Caco-2 (cell line): ENCODE measurements at regions of chr6 and their contacts with region 1.

Region 1: DNA sequence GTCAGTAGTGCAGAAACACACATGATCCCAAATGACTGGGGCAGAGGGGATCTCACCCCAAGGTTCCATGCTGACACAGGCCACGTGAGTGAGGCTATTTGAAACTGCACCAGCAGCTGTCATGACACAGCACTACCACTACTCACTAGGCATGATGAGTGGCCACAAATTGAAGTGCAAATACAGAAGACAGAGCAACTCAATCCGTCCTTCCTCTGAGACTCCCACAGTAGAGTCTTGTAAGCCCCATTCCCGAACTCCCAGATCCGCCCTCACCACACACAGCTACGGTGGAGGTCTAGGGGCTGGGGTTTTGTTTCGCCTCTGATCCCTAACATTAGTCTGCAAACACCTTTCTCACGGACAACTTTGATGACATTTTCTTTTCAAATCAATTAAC is 113.3 kb upstream of the NUP153 start:
- DNase-seq: peak in 1 of 2 experiments; percentile 9
- H3K4me3 ChIP-seq: no peak overlapping the region
- H3K4me3 Mint-ChIP-seq: no peak overlapping the region
- H3K27ac Mint-ChIP-seq: no peak overlapping the region
- H3K4me1 ChIP-seq: peaks cover 17% of the 10 kb centered on the region
- H3K4me1 Mint-ChIP-seq: peaks cover 14% of the 10 kb centered on the region
- H3K27me3 ChIP-seq: no peaks in the 10 kb centered on the region
- H3K27me3 Mint-ChIP-seq: no peaks in the 10 kb centered on the region
- CTCF ChIP-seq: peak in 1 of 2 experiments; percentile 5

Region 2: DNA sequence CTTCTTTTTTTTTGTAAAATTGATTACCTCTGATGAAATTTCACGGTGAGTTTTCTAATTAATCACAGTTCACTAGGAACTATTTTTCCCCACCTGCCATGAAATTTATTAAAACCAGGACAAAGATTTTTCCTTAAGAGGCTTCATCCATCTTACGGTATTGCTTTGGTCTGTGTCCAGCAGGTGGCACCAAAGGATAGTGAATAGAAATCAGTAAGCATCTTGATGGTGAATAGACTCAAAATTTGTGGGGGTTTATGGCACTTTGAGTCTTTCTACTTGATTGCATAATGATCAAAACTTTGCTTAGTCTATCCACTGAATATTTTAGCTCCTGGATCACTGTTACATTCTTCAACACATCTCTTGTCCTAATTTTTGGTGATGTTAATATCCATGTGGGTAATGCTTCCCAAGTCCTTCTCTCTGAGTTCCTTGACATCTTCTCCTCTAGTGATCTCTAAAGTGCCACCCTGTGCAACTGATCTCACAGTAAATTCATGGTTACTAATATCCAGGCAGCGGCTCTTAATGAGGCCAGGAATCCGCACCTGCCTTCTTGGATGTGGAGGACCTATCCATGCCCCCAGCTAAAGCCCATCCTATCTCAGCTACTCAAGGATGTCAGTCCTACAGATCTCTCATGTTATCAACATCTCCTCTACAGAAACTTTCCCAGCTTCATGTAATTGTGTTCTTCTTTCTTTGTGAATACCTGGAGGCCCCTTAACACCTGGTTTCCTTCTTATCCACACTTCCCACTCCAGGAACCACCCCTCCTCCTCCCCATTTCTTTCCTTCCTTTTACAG is 663.7 kb before region 1 on chr6:
- CTCF ChIA-PET with region 1: no interaction called
- POLR2A ChIA-PET with region 1: no interaction called
- intact Hi-C with region 1: loop called (anchors 1 kb)
- DNase-seq: peak; percentile 47 to 70
- H3K4me3 ChIP-seq: no peak overlapping the region
- H3K4me3 Mint-ChIP-seq: no peak overlapping the region
- H3K27ac Mint-ChIP-seq: no peak overlapping the region
- H3K4me1 ChIP-seq: no peaks in the 10 kb centered on the region
- H3K4me1 Mint-ChIP-seq: no peaks in the 10 kb centered on the region
- H3K27me3 ChIP-seq: no peaks in the 10 kb centered on the region
- H3K27me3 Mint-ChIP-seq: peaks cover 4% of the 10 kb centered on the region
- CTCF ChIP-seq: peak; percentile 61 to 65

Region 3: GRCh38 chr6:17633465-17634188 is 186.4 kb before region 1 on chr6:
- CTCF ChIA-PET with region 1: no interaction called
- POLR2A ChIA-PET with region 1: no interaction called
- intact Hi-C with region 1: loop called (anchors 5 kb)
- DNase-seq: no peak
- H3K4me3 ChIP-seq: no peak overlapping the region
- H3K4me3 Mint-ChIP-seq: no peak overlapping the region
- H3K27ac Mint-ChIP-seq: no peak overlapping the region
- H3K4me1 ChIP-seq: peaks cover 16% of the 10 kb centered on the region
- H3K4me1 Mint-ChIP-seq: peaks cover 15% of the 10 kb centered on the region
- H3K27me3 ChIP-seq: no peaks in the 10 kb centered on the region
- H3K27me3 Mint-ChIP-seq: no peaks in the 10 kb centered on the region
- CTCF ChIP-seq: no peak

Region 4: GRCh38 chr6:17790489-17790888 is 29.6 kb before region 1 on chr6:
- CTCF ChIA-PET with region 1: no interaction called
- POLR2A ChIA-PET with region 1: no interaction called
- intact Hi-C with region 1: no loop called
- DNase-seq: peak in 1 of 2 experiments; percentile 29
- H3K4me3 ChIP-seq: no peak overlapping the region
- H3K4me3 Mint-ChIP-seq: no peak overlapping the region
- H3K27ac Mint-ChIP-seq: no peak overlapping the region
- H3K4me1 ChIP-seq: no peaks in the 10 kb centered on the region
- H3K4me1 Mint-ChIP-seq: no peaks in the 10 kb centered on the region
- H3K27me3 ChIP-seq: no peaks in the 10 kb centered on the region
- H3K27me3 Mint-ChIP-seq: no peaks in the 10 kb centered on the region
- CTCF ChIP-seq: no peak